Activated CD4-positive, alpha-beta T cell treated with anti-CD3 and anti-CD28 coated beads for 36 hours (primary cell): ENCODE measurements at regions of chr19 and their contacts with region 1.

Region 1: GRCh38 chr19:2475702-2476450 is at the start of gene GADD45B:
- DNase-seq: peak; percentile 98
- ATAC-seq: peak; percentile 53
- H3K4me3 Mint-ChIP-seq: peak within 1 kb of the TSS; percentile 94
- H3K27ac Mint-ChIP-seq: peak within 1 kb of the TSS; percentile 90
- H3K4me1 Mint-ChIP-seq: peaks cover 22% of the 10 kb centered on the region
- H3K27me3 Mint-ChIP-seq: no peaks in the 10 kb centered on the region
- total RNA-seq, gene GADD45B: 57.7 to 71.2 TPM

Region 2: DNA sequence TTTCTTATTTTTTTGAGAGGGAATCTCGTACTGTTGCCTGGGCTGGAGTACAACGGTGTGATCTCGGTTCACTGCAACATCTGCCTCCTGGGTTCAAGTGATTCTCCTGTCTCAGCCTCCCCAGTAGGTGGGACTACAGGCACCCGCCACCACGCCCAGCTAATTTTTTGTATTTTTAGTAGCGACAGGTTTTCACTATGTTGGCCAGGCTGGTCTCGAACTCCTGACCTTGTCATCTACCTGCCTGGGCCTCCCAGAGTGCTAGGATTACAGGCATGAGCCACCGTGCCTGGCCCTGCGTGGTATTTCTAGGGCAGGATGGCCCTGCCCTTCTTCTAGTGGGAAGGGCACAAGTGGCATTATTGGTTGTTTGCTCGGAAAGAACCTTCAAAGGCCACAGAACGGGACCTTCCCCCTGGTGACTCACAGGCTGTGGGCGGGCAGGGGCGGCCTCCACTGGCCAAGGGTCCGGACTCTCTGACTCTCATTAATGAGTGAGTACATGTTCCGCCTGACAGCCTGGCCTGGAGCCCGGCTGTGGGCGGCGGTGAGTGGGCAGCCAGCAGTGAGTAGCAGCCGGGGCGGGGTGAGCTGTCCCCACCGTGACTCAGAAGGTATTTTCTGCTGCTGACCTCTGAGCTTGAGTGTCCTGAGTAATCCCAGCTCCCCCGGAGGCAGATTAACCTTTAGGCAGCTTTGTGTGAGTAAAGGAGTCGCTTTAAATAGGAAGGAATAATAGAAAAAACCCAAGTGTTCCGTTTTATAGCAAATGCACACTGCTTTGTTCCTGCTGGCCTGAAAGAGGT is 307.1 kb before region 1 on chr19:
- CTCF ChIA-PET with region 1: no interaction called
- POLR2A ChIA-PET with region 1: no interaction called
- intact Hi-C with region 1: loop called in 1 of 2 experiments (anchors 5 kb)
- DNase-seq: peak; percentile 90
- ATAC-seq: peak; percentile 53
- H3K4me3 Mint-ChIP-seq: peak overlapping the region; percentile 43
- H3K27ac Mint-ChIP-seq: peak overlapping the region; percentile 72
- H3K4me1 Mint-ChIP-seq: peaks cover 71% of the 10 kb centered on the region
- H3K27me3 Mint-ChIP-seq: no peaks in the 10 kb centered on the region

Region 3: DNA sequence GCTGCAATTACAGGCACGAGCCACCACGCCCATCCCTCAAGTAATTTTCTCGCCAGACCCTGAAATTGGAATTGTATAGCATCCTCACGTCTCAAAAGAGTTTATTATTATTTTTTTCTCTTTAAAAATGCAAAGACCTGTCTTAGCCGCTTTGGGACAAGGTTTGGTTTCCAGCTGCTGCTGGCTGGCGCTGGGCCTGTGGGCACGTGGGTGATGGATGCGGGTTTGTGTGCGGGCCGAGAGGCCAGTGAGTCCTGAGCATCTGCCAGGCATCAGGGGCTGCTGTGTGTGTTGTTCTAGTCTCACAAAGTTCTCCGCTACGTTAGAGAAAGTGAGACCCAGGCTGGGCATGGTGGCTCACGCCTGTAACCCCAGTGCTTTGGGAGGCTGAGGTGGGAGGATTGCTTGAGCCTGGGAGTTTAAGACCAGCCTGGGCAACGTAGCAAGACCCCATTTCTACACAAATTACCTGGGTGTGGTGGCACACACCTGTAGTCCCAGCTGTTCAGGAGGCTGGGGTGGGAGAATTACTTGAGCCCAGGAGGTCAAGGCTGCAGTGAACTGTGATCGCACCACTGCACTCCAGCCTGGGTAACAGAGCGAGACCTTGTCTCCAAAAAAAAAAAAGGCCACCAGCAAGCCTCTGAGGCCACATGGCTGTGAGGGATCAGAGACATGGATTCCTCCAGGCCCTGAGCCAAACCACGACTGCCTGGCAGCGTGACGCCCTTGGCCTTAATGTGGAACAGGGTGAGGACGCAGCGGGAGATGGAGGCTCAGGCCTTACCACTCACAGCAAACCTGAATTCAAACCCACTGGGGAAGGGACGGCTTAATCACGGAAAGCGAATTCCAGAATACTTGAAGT is 120.5 kb before region 1 on chr19:
- CTCF ChIA-PET with region 1: no interaction called
- POLR2A ChIA-PET with region 1: no interaction called
- intact Hi-C with region 1: no loop called
- DNase-seq: no peak
- ATAC-seq: no peak
- H3K4me3 Mint-ChIP-seq: no peak overlapping the region
- H3K27ac Mint-ChIP-seq: no peak overlapping the region
- H3K4me1 Mint-ChIP-seq: peaks cover under 1% of the 10 kb centered on the region
- H3K27me3 Mint-ChIP-seq: peaks cover 1% of the 10 kb centered on the region

Region 4: GRCh38 chr19:2494444-2495129 is 18.7 kb after region 1 on chr19:
- CTCF ChIA-PET with region 1: interaction called, 4 read pairs
- POLR2A ChIA-PET with region 1: interaction called, 12 read pairs
- intact Hi-C with region 1: no loop called
- DNase-seq: peak; percentile 69
- ATAC-seq: peak; percentile 82
- H3K4me3 Mint-ChIP-seq: peak overlapping the region; percentile 52
- H3K27ac Mint-ChIP-seq: no peak overlapping the region
- H3K4me1 Mint-ChIP-seq: peaks cover 13% of the 10 kb centered on the region
- H3K27me3 Mint-ChIP-seq: peaks cover 33% of the 10 kb centered on the region

Region 5: GRCh38 chr19:2552859-2553258 is 77.0 kb after region 1 on chr19:
- CTCF ChIA-PET with region 1: interaction called, 4 read pairs
- POLR2A ChIA-PET with region 1: interaction called, 21 read pairs
- intact Hi-C with region 1: loop called (anchors 1 to 2 kb)
- DNase-seq: peak; percentile 71
- ATAC-seq: peak; percentile 92
- H3K4me3 Mint-ChIP-seq: peak overlapping the region; percentile 50
- H3K27ac Mint-ChIP-seq: peak overlapping the region; percentile 78
- H3K4me1 Mint-ChIP-seq: peaks cover 13% of the 10 kb centered on the region
- H3K27me3 Mint-ChIP-seq: peaks cover 3% of the 10 kb centered on the region

Region 6: GRCh38 chr19:2602391-2603181 is 126.7 kb after region 1 on chr19:
- CTCF ChIA-PET with region 1: interaction called, 65 read pairs
- POLR2A ChIA-PET with region 1: interaction called, 55 read pairs
- intact Hi-C with region 1: loop called in 1 of 2 experiments (anchors 1 kb)
- DNase-seq: no peak
- ATAC-seq: no peak
- H3K4me3 Mint-ChIP-seq: no peak overlapping the region
- H3K27ac Mint-ChIP-seq: no peak overlapping the region
- H3K4me1 Mint-ChIP-seq: peaks cover 24% of the 10 kb centered on the region
- H3K27me3 Mint-ChIP-seq: peaks cover 8% of the 10 kb centered on the region

Region 7: GRCh38 chr19:2627319-2627829 is 151.5 kb after region 1 on chr19:
- CTCF ChIA-PET with region 1: interaction called, 4 read pairs
- POLR2A ChIA-PET with region 1: interaction called, 106 read pairs
- intact Hi-C with region 1: no loop called
- DNase-seq: peak; percentile 84
- ATAC-seq: peak; percentile 97
- H3K4me3 Mint-ChIP-seq: peak overlapping the region; percentile 38
- H3K27ac Mint-ChIP-seq: peak overlapping the region; percentile 81
- H3K4me1 Mint-ChIP-seq: peaks cover 39% of the 10 kb centered on the region
- H3K27me3 Mint-ChIP-seq: no peaks in the 10 kb centered on the region